AG04449 (cell line): ENCODE measurements at regions of chr17 and their contacts with region 1.

Region 1: GRCh38 chr17:38322091-38322779 is 21.5 kb downstream of the GPR179 start:
- DNase-seq: no peak
- H3K4me3 ChIP-seq: no peak overlapping the region
- CTCF ChIP-seq: peak; percentile 77

Region 2: DNA sequence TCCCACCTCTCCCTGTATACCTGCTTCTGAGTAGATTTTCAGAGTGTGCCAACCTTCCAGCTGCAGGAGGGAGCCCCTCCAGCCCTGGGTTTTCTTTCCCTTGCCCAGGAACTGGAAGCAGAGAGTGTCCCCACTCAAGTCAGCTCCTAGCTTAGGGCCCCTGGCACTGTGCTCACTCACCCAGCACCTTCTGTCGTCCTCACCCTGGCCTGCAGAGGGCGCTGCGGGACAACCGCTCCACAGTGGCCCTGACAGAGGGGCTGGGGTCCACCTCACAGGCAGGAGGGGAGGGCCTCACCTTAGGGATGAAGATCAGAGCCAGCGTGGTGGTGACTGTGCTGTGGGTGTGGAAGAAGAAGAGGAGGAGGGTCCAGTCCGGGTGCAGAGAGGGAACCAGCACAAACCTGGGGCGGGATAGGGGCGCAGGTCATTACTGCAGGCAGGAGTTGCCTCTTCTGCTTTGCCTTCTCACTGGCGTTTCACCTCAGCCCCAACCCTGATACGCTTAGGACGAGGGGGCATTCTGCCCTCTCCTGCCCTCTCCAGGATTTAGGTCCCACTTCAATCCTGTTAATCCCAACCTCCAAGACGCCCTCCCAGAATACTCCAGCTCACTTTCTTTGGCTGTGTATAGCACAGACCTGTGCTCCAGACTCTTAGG is 11.5 kb after region 1 on chr17:
- CTCF ChIA-PET with region 1: interaction called, 140 read pairs
- POLR2A ChIA-PET with region 1: no interaction called
- DNase-seq: no peak
- H3K4me3 ChIP-seq: no peak overlapping the region
- CTCF ChIP-seq: peak; percentile 75

Region 3: GRCh38 chr17:38341035-38341721 is 18.9 kb after region 1 on chr17:
- CTCF ChIA-PET with region 1: interaction called, 140 read pairs
- POLR2A ChIA-PET with region 1: interaction called, 4 read pairs
- DNase-seq: no peak
- H3K4me3 ChIP-seq: no peak overlapping the region
- CTCF ChIP-seq: no peak

Region 4: GRCh38 chr17:38379438-38379837 is 57.2 kb after region 1 on chr17:
- CTCF ChIA-PET with region 1: no interaction called
- POLR2A ChIA-PET with region 1: no interaction called
- DNase-seq: no peak
- H3K4me3 ChIP-seq: no peak overlapping the region
- CTCF ChIP-seq: no peak